ENCODE measurements at regions of chr18 and their contacts with region 1.

Region 1: DNA sequence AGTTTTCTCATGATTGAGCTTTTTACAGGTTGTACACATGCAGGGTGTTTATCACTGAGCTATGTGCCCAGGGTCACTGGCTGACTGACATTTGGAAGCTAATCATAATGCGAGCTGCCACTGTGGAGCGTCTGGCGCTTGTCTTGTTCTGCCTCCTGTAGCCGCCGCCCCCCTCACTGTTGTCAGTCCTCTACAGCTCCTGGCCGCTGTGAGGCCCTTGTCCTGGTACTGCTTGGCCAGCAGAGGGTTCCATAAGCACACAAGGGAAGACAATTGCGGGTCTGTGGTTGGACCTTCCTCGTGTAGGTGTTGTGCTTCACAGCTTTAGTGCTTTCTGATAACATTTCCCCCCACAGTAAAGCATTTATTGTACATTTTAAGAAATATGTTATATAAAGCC is 105.6 kb upstream of the LDLRAD4 start:
- DNase-seq: peak; percentile 43 to 86 (median 76)
- H3K4me3 ChIP-seq: no peak overlapping the region
- H3K27ac ChIP-seq: peak overlapping the region in 19 of 59 donors; percentile 2 to 73 (median 30)
- H3K27me3 ChIP-seq: no peaks in the 10 kb centered on the region
- CTCF ChIP-seq: peak in 55 of 56 donors; percentile 17 to 77 (median 60)

Region 2: GRCh38 chr18:13159579-13159978 is 46.6 kb after region 1 on chr18:
- intact Hi-C with region 1: loop called in 1 of 2 experiments (anchors 2 kb)
- DNase-seq: no peak
- H3K4me3 ChIP-seq: no peak overlapping the region
- H3K27ac ChIP-seq: no peak overlapping the region
- H3K27me3 ChIP-seq: no peaks in the 10 kb centered on the region
- CTCF ChIP-seq: peak; percentile 39 to 88 (median 74)